ENCODE measurements at regions of chr16 and their contacts with region 1.

Region 1: DNA sequence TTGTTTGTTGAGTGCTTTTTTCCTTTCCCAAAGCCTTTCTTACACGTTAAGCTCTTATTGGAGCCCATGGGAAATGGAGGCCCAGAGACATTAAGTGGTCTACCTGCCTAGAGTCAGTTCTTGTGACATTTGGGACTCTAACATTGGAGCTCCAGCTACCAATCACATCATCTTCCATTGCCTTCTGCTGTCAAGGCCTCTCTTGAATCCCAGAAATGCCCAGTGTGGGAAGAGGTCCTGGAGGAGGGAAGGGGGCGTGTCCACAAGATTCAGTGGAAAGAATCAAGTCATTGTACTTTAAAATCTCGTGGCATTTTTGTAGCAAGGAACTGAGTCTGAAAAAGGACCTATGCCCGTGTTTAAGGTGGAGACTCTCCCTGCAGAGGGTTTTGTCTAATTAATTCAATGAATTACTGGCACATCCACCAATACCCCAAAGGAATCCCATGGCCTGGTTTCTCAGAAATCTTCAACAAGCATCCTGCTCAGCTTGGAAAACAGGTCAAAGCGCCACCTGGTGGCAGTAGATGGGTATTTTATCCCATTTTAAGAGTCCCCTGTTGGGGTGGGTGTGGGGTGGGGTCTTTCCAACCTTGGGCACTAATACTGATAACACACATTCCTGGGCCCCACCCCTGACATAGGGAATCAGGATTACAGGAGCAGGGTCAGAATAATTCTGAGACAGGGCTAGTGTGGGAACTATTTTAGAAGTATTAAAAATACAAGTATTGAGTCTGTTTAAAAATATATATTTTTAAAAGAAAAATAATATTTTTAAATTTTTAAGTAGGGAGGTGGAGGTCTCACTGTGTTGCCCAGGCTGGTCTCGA is 24.6 kb downstream of the GPT2 start:
- DNase-seq: peak; percentile 66
- H3K4me3 Mint-ChIP-seq: no peak overlapping the region
- H3K27ac Mint-ChIP-seq: no peak overlapping the region
- H3K4me1 Mint-ChIP-seq: peaks cover 5% of the 10 kb centered on the region
- H3K27me3 Mint-ChIP-seq: no peaks in the 10 kb centered on the region

Region 2: GRCh38 chr16:46853713-46854443 is 54.9 kb before region 1 on chr16:
- CTCF ChIA-PET with region 1: interaction called, 102 read pairs
- POLR2A ChIA-PET with region 1: no interaction called
- intact Hi-C with region 1: loop called (anchors 1 kb)
- DNase-seq: peak; percentile 77
- H3K4me3 Mint-ChIP-seq: no peak overlapping the region
- H3K27ac Mint-ChIP-seq: no peak overlapping the region
- H3K4me1 Mint-ChIP-seq: no peaks in the 10 kb centered on the region
- H3K27me3 Mint-ChIP-seq: peaks cover 3% of the 10 kb centered on the region

Region 3: DNA sequence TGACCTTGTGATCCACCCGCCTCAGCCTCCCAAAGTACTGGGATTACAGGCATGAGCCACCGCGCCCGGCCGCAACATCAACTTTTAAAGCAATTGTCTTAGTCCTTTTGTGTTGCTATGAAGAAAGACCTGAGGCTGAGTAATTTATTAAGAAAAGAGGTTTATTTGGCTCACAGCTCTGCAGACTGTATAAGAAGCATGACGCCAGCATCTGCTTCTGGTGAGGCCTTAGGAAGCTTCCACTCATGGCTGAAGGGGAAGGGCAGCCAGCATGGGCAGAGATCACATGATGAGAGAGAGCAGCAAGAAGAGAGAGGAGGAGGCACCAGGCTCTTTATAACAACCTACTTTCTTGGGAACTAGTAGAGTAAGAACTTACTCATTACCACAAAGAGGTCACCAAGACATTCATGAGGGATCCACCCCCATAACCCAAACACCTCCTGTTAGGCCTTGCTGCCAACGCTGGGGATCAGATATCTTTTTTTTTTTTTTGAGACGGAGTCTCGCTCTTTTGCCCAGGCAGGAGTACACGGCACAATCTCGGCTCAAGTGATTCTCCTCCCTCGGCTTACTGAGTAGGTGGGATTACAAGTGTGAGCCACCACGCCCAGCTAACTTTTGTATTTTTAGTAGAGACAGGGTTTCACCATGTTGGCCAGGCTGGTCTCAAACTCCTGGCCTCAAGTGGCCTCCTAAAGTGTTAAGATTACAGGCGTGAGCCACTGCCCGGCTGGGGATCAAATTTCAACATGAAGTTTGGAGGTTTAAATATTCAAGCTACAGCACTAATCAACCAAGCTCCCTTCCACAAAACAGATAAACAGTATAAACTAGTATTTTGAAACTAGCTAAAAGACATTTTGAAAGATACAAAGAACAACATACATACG is 46.0 kb before region 1 on chr16:
- CTCF ChIA-PET with region 1: interaction called, 16 read pairs
- POLR2A ChIA-PET with region 1: no interaction called
- intact Hi-C with region 1: no loop called
- DNase-seq: peak; percentile 32
- H3K4me3 Mint-ChIP-seq: no peak overlapping the region
- H3K27ac Mint-ChIP-seq: peak overlapping the region; percentile 3
- H3K4me1 Mint-ChIP-seq: peaks cover 34% of the 10 kb centered on the region
- H3K27me3 Mint-ChIP-seq: no peaks in the 10 kb centered on the region

Region 4: DNA sequence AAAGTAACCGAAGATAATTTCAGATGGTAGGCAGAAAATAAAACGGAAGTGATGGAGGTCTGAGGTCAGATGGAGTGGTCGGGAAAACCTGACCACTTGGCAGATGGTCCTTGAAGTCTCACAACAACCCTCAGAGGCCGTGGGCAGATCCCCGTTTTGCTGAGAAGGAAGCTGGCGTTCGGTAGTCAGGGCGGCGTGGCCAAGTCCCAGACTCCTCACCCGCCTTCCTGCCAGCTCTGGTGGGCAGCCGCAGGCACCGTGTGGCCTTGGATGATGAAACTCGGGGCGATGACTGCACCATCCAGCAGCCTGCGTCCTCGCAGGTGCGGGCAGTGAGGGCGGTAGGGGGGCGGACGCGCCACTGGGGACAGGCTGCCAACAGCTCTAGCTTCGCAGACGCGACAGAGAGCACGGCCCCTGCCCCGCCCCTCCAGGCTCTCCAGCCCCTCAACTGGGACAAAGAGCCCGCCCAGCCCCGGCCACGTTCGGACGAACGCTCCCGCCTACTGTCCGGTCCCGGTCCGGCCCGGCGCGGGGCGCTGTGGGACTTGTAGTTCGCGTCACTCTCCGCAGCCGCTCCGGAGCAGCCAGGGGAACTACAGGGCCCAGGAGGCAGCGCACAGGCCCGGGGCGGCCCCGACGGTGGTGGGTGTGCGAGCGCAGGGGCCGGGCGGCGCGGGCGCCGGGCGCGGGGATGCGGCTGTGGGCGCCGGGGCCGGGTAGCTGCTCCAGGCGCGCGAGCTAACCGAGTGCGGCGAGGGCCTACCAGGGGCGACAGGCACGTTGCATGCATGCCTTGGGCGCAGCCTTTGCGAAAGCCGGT is 24.9 kb before region 1 on chr16 and contains the start of gene GPT2:
- CTCF ChIA-PET with region 1: interaction called, 14 read pairs
- POLR2A ChIA-PET with region 1: no interaction called
- intact Hi-C with region 1: no loop called
- DNase-seq: peak; percentile 88
- H3K4me3 Mint-ChIP-seq: peak within 1 kb of the TSS; percentile 73
- H3K27ac Mint-ChIP-seq: peak within 1 kb of the TSS; percentile 72
- H3K4me1 Mint-ChIP-seq: peaks cover 18% of the 10 kb centered on the region
- H3K27me3 Mint-ChIP-seq: peaks cover 5% of the 10 kb centered on the region
- total RNA-seq, gene GPT2: 20.2 to 23.1 TPM

Region 5: GRCh38 chr16:47204736-47205504 is 296.2 kb after region 1 on chr16:
- CTCF ChIA-PET with region 1: no interaction called
- POLR2A ChIA-PET with region 1: no interaction called
- intact Hi-C with region 1: no loop called
- DNase-seq: no peak
- H3K4me3 Mint-ChIP-seq: no peak overlapping the region
- H3K27ac Mint-ChIP-seq: no peak overlapping the region
- H3K4me1 Mint-ChIP-seq: no peaks in the 10 kb centered on the region
- H3K27me3 Mint-ChIP-seq: no peaks in the 10 kb centered on the region

Measured in activated CD4-positive, alpha-beta memory T cell treated with anti-CD3 and anti-CD28 coated beads for 36 hours (primary cell).